Activated CD4-positive, alpha-beta T cell treated with anti-CD3 and anti-CD28 coated beads, Interleukin-2, amount 10 ng/mL, durations not matched to agents 24 days and 14 days (primary cell): ENCODE measurements at regions of chr17 and their contacts with region 1.

Region 1: DNA sequence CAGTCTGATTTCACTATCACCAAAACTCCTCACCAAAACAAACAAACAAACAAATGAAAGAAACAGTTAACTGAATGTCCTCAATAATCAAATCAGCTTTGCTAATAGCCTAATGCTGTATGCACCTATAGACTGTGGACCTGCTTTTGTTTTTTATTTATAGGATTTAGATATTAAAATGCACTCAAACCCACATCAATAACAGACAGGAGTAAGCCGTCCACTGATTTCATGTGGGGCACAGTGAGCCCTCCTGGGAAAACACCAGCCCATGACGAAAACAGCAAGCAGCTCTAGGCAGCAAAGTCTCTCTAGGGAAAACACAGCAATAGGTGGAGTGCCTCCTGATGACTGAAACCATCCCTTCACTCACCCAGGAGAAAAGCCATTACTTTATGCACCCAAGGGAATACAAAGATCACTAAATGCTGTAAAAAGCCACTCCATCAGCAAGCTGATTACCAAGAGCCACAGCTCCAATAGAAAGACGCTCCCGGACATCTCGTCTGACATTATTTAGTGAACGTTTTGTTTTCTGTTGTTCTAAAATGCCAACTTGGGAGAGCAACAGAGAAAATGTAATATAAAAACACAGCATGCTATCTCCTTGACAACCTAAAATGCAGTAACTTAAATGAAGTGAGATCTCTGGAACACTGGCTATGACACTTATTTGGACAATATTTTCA is 47.8 kb downstream of the ANKFY1 start:
- DNase-seq: no peak
- H3K4me3 Mint-ChIP-seq: no peak overlapping the region
- H3K27ac Mint-ChIP-seq: peak overlapping the region; percentile 35
- H3K4me1 Mint-ChIP-seq: peaks cover 9% of the 10 kb centered on the region
- H3K27me3 Mint-ChIP-seq: no peaks in the 10 kb centered on the region

Region 2: DNA sequence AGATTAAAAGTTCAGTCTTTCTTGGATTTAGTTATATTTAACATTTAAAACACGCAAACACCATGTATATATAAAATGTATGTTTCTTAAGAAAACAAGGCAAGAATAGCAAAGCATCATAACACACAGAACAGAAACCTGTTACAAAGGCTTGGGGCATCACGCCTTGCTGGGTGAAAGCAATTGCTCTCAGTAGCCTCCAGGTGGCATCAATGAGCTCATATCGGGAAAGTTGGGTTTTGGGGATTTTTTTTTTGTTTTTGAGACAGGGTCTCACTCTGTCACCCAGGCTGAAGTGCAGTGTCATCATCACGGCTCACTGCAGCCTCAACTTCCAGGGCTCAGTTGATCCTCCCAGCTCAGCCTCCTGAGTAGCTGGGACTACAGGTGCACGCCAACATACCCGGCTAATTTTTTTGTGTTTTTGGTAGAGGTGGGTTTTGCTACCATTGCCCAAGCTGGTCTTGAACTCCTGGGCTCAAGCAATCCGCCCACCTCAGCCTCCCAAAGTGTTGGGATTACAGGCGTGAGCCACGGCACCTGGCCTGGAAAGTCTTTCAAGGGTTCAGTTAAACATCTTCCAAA is 16.1 kb before region 1 on chr17:
- intact Hi-C with region 1: no loop called
- DNase-seq: peak; percentile 81
- H3K4me3 Mint-ChIP-seq: no peak overlapping the region
- H3K27ac Mint-ChIP-seq: no peak overlapping the region
- H3K4me1 Mint-ChIP-seq: peaks cover 9% of the 10 kb centered on the region
- H3K27me3 Mint-ChIP-seq: no peaks in the 10 kb centered on the region

Region 3: DNA sequence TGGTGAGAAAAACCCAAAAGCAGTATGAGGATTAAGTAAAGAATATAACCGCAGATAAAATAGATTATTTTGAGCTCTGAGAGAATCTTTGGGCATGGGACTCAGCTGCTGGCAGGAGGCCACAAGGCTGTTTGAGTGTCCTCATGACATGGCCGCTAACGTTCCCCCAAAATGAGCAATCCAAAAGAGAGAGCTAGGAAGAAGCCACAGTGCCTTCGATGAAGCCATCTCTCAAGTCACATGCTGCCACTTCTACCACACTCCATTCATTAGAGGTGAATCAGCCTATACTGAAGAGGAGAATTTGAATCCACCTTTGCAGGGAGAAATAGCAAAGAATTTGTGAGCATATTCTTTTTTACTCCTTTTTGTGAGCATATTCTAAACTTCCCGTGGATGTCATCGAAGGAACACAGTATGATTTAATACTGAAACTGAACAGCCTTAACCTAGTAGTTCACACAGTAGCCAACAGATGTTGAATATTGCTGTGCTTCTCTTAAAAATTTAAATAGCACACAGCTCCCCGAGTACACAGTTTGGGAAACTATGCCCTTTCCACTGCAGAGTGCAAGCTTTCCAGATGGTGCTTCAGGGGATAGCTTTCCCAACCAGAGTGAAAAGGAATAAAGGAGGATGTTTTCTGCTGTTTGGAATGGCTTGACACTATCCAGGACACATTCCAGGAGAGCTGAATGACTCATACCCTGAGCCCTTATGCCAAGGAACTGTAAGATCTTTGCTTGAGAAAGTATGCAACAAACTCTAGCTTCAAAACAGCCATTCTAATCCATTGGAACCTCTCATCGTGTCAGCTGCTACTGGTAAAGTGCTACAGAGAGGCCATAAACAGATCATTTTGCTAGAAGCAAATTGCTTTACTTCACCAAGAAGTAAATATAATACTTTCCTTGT is 13.9 kb after region 1 on chr17:
- intact Hi-C with region 1: no loop called
- DNase-seq: no peak
- H3K4me3 Mint-ChIP-seq: no peak overlapping the region
- H3K27ac Mint-ChIP-seq: no peak overlapping the region
- H3K4me1 Mint-ChIP-seq: peaks cover 17% of the 10 kb centered on the region
- H3K27me3 Mint-ChIP-seq: no peaks in the 10 kb centered on the region

Region 4: DNA sequence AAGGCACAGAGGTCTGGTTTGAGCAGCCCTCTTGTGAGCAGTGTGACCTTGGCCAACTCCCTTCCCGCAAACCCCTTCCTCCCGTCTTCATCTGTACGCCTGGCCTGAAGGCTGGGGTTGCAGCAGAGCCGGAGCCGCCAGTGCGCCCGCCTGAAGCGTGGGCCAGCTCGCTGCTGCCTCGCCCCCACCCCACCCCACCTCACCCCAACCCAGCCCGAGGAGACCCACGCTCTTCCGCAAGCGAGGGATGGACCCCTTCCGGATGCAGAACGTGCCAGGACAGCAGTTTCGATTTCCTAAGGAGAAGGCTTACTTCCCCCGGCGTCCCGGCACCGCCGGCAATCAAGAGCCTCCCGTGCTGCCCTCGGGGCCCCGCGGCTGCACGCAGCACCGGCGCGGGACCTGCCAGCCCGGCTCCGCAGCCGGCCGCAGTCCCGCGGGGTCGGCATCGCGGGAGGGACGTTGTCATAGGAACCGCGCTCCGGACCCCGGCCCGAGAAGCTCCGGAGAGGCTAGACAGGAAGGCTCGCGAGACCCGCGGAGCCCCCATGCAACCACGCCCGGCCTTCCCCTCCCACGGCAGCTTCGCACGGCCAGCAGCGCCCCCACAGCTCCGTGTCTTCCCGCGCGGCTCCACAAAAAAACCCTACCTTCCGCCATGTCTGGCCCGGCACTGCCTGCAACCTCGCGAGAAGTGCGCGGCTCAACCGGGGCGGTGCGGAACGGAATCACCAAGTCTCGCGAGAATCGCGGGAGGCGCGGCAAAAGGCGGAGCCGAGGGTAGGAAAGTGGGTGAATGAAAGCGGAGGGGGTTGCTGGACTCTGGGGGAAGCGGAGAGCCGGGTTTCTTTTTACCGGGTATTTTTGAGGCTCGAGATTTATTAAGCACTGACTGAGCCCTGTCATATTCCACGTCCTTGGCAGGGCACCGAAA is 47.5 kb after region 1 on chr17 and contains the start of gene ANKFY1:
- intact Hi-C with region 1: loop called (anchors 5 kb)
- DNase-seq: peak; percentile 100
- H3K4me3 Mint-ChIP-seq: peak within 1 kb of the TSS; percentile 95
- H3K27ac Mint-ChIP-seq: peak within 1 kb of the TSS; percentile 95
- H3K4me1 Mint-ChIP-seq: peaks cover 31% of the 10 kb centered on the region
- H3K27me3 Mint-ChIP-seq: no peaks in the 10 kb centered on the region
- total RNA-seq, gene ANKFY1: 53.1 and 53.6 TPM in 2 replicates

Region 5: GRCh38 chr17:4293572-4293971 is 77.5 kb after region 1 on chr17:
- intact Hi-C with region 1: no loop called
- DNase-seq: no peak
- H3K4me3 Mint-ChIP-seq: no peak overlapping the region
- H3K27ac Mint-ChIP-seq: peak overlapping the region; percentile 3
- H3K4me1 Mint-ChIP-seq: peaks cover 4% of the 10 kb centered on the region
- H3K27me3 Mint-ChIP-seq: no peaks in the 10 kb centered on the region

Region 6: GRCh38 chr17:4304417-4305027 is 88.5 kb after region 1 on chr17:
- intact Hi-C with region 1: loop called (anchors 2 kb)
- DNase-seq: peak; percentile 88
- H3K4me3 Mint-ChIP-seq: no peak overlapping the region
- H3K27ac Mint-ChIP-seq: peak overlapping the region; percentile 4
- H3K4me1 Mint-ChIP-seq: peaks cover 9% of the 10 kb centered on the region
- H3K27me3 Mint-ChIP-seq: no peaks in the 10 kb centered on the region